ENCODE measurements at regions of chr1 and their contacts with region 1.

Region 1: GRCh38 chr1:114716304-114717170 is at the start of gene NRAS:
- DNase-seq: peak; percentile 73 to 98
- H3K4me3 ChIP-seq: peak within 1 kb of the TSS; percentile 97 to 98 (median 97)
- H3K27ac ChIP-seq: peak within 1 kb of the TSS; percentile 95
- H3K4me1 ChIP-seq: no peaks in the 10 kb centered on the region; a peak in 1 of 7 replicates
- H3K27me3 ChIP-seq: no peaks in the 10 kb centered on the region
- CTCF ChIP-seq: no peak
- EP300 ChIP-seq: peak in 1 of 2 experiments; percentile 57; a peak in 1 of 3 replicates
- POLR2A ChIP-seq: peak; percentile 62 to 91
- RAD21 ChIP-seq: no peak
- total RNA-seq, gene NRAS: 63.2 and 65.1 TPM in 2 replicates

Region 2: DNA sequence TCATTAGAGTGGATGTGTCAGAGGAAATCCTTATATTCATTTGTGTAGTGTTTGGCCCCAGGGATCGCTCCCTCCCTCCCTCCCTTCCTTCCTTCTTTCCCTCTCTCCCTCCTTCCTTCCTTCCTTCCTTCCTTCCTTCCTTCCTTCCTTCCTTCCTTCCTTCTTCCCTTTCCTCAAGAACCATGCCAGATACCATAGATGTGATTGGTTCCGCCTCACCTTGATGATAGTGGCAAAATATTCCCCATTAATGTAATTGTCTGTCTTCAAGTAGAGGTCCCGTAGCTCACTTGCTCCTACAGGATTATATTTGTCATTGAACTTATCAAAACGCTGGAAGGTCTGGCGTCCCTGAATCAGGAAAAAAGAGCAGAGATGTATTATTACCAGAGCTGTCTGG is 38.8 kb before region 1 on chr1:
- CTCF ChIA-PET with region 1: no interaction called
- POLR2A ChIA-PET with region 1: no interaction called
- DNase-seq: no peak
- H3K4me3 ChIP-seq: no peak overlapping the region
- H3K27ac ChIP-seq: no peak overlapping the region
- H3K4me1 ChIP-seq: no peaks in the 10 kb centered on the region
- H3K27me3 ChIP-seq: no peaks in the 10 kb centered on the region; a peak in 1 of 7 replicates
- CTCF ChIP-seq: no peak
- EP300 ChIP-seq: no peak
- POLR2A ChIP-seq: no peak
- RAD21 ChIP-seq: no peak

Region 3: GRCh38 chr1:114695430-114696058 is 21.0 kb before region 1 on chr1 and contains the start of gene AMPD1:
- CTCF ChIA-PET with region 1: interaction called, 3 read pairs
- POLR2A ChIA-PET with region 1: interaction called, 12 read pairs
- DNase-seq: no peak
- H3K4me3 ChIP-seq: no peak within 1 kb of the TSS
- H3K27ac ChIP-seq: no peak within 1 kb of the TSS
- H3K4me1 ChIP-seq: no peaks in the 10 kb centered on the region
- H3K27me3 ChIP-seq: no peaks in the 10 kb centered on the region
- CTCF ChIP-seq: no peak
- EP300 ChIP-seq: no peak
- POLR2A ChIP-seq: no peak
- RAD21 ChIP-seq: no peak
- total RNA-seq, gene AMPD1: not detected in 2 replicates

Region 4: DNA sequence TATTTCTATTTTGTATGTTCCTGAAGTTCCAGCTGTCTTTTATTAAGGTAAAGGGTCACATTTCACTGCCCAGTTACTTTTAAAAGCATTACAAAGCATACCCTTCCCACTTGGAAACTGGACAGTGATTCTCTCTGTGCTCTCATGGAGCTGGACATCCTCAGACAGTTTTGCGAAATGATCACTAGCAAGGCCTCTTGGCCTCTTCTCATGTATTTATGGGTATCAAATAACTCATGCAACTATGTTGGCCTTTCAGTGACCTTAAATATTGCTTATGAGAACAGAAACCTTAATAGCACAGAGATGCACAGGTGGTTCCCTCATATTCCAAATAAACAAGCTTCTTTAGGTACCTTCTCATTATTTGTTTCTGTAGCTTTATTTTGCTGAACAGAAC is 13.3 kb before region 1 on chr1:
- CTCF ChIA-PET with region 1: interaction called, 3 read pairs
- POLR2A ChIA-PET with region 1: interaction called, 54 read pairs
- DNase-seq: no peak
- H3K4me3 ChIP-seq: no peak overlapping the region
- H3K27ac ChIP-seq: no peak overlapping the region
- H3K4me1 ChIP-seq: no peaks in the 10 kb centered on the region
- H3K27me3 ChIP-seq: no peaks in the 10 kb centered on the region
- CTCF ChIP-seq: no peak
- EP300 ChIP-seq: no peak
- POLR2A ChIP-seq: no peak
- RAD21 ChIP-seq: no peak

Region 5: DNA sequence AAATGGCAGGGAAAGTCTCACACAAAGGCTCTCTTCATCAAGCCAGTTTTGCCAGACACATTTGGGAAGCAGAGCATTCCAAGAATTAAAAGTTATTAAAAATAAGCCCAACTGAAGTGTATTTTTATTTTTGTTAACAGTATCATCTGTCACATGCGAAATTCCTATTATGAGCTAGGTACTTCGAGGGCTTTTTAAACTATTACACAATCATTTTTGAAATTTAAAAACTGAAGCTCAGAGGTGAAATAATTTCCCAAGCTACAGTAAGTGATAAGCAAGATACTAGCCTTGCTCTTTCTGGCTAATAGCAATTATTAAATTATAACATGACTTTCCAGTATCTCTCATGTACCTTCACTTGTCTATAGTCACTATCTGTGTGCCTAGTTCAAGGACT is 12.0 kb after region 1 on chr1:
- CTCF ChIA-PET with region 1: interaction called, 3 read pairs
- POLR2A ChIA-PET with region 1: interaction called, 11 read pairs
- DNase-seq: no peak
- H3K4me3 ChIP-seq: no peak overlapping the region
- H3K27ac ChIP-seq: no peak overlapping the region
- H3K4me1 ChIP-seq: no peaks in the 10 kb centered on the region
- H3K27me3 ChIP-seq: no peaks in the 10 kb centered on the region
- CTCF ChIP-seq: no peak
- EP300 ChIP-seq: no peak
- POLR2A ChIP-seq: no peak
- RAD21 ChIP-seq: no peak

Region 6: DNA sequence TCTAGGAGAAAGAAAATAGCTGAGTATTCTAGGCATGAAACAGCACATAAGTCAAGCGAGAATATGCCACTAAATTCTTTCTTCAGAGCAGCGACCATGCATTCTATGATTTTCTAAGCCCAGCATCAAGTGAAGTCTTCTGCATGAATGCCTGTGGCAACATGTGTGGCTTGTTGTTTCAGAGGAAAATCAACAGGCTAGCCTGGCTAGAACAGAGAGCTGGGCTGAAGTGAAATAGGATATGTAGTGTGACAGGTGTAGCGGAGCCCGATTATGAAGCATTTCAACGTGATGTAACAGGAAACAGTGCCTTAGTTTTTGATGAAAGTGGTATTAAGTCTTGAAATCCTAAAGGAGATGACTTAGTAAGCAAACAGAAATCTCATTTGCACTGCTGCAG is 34.2 kb after region 1 on chr1:
- CTCF ChIA-PET with region 1: no interaction called
- POLR2A ChIA-PET with region 1: interaction called, 28 read pairs
- DNase-seq: no peak
- H3K4me3 ChIP-seq: no peak overlapping the region
- H3K27ac ChIP-seq: no peak overlapping the region
- H3K4me1 ChIP-seq: peaks cover 0 to 12% (median 1%) of the 10 kb centered on the region in 4 experiments; a peak in 2 of 7 replicates
- H3K27me3 ChIP-seq: no peaks in the 10 kb centered on the region
- CTCF ChIP-seq: no peak
- EP300 ChIP-seq: no peak
- POLR2A ChIP-seq: no peak
- RAD21 ChIP-seq: no peak

Region 7: DNA sequence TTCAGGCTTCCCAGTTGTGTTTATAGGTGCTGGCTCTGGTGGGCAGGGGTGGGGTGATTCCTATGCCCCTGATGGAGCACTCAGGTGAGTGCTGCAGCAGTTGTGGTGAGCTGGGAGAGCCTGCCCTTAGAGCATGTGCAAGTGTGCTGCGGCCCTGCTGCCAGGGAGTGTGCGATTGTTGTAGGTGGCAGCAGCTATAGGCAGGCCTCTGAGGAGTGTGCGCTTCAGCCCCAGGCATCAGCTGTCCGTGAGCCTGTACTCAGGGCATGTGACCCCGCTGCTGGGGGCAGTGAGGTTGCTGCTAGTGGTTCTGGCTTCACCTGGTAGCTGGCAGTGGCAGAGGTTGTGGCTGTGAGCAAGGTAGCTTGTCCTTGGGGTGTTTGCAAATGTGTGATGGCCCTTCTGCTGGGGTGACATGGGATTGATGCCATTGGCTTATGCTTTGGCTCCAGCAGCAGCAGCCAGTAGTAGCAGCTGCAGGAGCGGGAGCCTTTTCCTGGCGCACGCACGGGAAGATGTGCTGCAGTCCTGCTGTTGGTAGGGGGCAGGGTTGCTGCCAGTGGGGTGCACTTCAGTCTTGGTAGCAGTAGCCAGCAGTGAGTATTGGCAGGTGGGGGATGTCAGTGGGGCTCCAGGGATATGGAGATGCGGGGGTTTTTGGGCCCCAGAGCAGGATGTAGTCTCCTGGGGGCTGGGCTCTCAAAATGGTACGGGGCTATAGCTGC is 175.8 kb after region 1 on chr1:
- CTCF ChIA-PET with region 1: no interaction called
- POLR2A ChIA-PET with region 1: no interaction called
- DNase-seq: peak; percentile 31 to 55
- H3K4me3 ChIP-seq: peak overlapping the region in 1 of 4 experiments; percentile 12; a peak in 1 of 8 replicates
- H3K27ac ChIP-seq: no peak overlapping the region
- H3K4me1 ChIP-seq: peaks cover 0 to 9% (median 4%) of the 10 kb centered on the region in 4 experiments; a peak in 3 of 7 replicates
- H3K27me3 ChIP-seq: no peaks in the 10 kb centered on the region
- CTCF ChIP-seq: peak; percentile 35 to 68 (median 43)
- EP300 ChIP-seq: no peak
- POLR2A ChIP-seq: no peak
- RAD21 ChIP-seq: peak; percentile 16 to 40; a peak in 3 of 4 replicates